Activated T-helper 1 cell treated with anti-CD3 and anti-CD28 coated beads, Interleukin-12 subunit alpha, Interleukin-12 subunit beta, Interleukin-2, Interleukin-4 antibody, amounts not matched to agents 30 ng/mL and 10 ng/mL and 1 ng/mL, durations not matched to agents 14 hours and 24 hours and 36 hours (primary cell): ENCODE measurements at regions of chr1 and their contacts with region 1.

Region 1: DNA sequence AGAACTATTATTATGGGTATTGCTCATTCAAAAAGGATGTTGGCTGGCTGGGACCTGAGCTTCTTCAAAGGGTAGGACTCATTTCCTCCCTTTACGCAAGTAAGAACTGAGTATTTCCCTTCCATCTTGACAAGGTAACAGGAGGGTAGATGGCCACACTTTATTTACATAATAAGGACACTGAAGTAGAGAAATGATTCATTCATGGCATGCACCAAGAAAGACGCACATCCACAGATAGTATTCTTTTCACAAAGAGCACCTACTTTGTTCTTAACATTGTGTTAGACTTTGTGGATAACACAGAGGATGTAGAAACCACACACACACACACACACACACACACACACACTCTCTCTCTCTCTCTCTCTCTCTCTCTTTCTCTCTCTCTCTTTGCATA is 82.9 kb downstream of the FAM78B start:
- DNase-seq: no peak
- H3K4me3 Mint-ChIP-seq: no peak overlapping the region
- H3K27ac Mint-ChIP-seq: no peak overlapping the region
- H3K4me1 Mint-ChIP-seq: peaks cover 22% of the 10 kb centered on the region
- H3K27me3 Mint-ChIP-seq: no peaks in the 10 kb centered on the region

Region 2: DNA sequence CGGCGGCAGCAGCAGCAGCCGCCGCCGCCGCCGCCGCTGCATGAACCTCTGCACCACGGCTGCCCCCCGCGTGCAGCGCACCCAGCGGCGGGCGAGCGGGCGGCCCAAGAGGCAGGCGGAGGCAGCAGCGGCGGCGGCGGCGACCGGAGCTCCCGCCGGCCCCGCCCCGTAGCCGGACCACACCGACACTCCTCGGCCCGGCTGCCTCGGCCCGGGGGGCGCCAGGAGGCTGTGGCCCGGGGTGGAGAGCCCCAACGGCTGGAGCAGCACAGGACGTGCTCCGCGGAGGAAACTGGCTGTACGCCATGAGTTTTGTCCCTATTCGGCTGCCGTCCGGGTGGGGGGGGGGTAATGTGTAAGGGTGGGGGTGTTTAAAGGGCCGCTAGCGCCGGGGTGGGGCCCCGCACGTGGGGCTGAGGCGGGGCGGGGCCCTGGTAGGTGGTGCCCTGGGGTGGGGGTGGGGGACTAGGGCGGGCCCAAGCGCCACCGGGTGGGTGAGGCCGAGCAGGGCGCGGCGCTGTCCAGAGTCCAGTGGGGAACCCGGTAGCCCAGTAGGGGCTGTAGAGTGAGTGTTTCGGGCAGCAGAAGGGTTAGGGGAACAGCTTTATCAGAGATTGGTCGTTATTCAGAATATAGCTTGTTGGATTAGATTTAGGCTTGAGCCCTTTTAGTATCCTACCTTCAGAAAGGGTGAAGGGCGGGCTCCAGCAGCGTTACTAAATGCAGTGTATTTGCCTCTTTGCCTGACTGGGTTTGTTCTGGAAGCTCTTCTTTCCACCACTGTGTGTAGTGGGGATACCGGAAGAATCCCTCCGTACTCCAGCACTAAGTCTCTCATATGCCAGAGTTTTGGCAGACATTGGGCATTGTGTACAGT is 83.0 kb after region 1 on chr1 and contains the start of gene FAM78B:
- intact Hi-C with region 1: loop called (anchors 5 kb)
- DNase-seq: peak; percentile 36
- H3K4me3 Mint-ChIP-seq: peak within 1 kb of the TSS; percentile 83
- H3K27ac Mint-ChIP-seq: no peak within 1 kb of the TSS
- H3K4me1 Mint-ChIP-seq: peaks cover 16% of the 10 kb centered on the region
- H3K27me3 Mint-ChIP-seq: peaks cover 39% of the 10 kb centered on the region
- total RNA-seq, gene FAM78B: 1.0 TPM in 2 replicates